Dendritic cell treated with granulocyte-macrophage colony-stimulating factor and Interleukin-4, amounts not matched to agents 40 ng/mL and 50 ng/mL, for 4 days (primary cell): ENCODE measurements at regions of chrX and their contacts with region 1.

Region 1: DNA sequence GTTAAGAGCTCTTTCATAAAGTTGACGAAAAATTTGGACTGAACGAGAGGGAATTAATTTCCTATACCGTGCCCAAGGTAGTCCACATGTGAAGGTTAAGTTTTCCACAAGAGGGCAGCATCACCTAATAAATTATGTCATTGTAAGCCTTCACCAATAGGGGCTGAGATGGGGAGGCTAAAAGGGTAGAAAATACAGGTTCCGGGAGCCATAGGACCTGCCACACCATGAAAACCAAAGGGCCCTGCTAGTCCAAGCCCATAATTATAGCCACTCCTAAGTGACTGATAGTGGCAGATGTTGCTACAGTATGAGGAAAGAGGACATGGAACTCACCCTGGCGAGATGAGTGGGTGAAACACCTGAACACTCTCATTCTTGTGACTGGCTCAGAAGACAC is 122.2 kb downstream of the SHROOM4 start:
- H3K4me3 Mint-ChIP-seq: no peak overlapping the region
- H3K27ac Mint-ChIP-seq: no peak overlapping the region
- H3K4me1 Mint-ChIP-seq: no peaks in the 10 kb centered on the region
- H3K27me3 Mint-ChIP-seq: no peaks in the 10 kb centered on the region

Region 2: GRCh38 chrX:50905334-50905733 is 213.5 kb after region 1 on chrX:
- intact Hi-C with region 1: loop called (anchors 5 kb)
- H3K4me3 Mint-ChIP-seq: no peak overlapping the region
- H3K27ac Mint-ChIP-seq: no peak overlapping the region
- H3K4me1 Mint-ChIP-seq: no peaks in the 10 kb centered on the region
- H3K27me3 Mint-ChIP-seq: no peaks in the 10 kb centered on the region

Region 3: DNA sequence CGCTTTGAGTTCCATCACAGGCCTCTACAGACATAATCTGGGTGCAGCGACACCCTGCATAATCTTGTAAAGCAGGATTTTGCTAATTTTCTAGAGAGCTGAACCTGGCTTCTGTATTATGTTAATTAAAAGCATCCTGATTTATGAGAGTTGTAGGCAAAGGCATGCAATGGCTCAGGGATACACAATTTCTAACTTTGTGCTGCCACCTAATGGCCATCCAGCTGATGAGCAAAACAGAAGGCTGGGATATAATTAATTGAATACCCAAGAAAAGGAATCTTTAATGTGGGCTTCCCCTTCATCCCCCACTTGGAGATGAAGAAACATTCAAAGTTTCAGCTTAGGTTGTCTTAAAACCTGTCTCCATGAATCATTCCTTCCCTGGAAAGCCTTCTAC is 296.8 kb after region 1 on chrX:
- intact Hi-C with region 1: loop called (anchors 5 kb)
- H3K4me3 Mint-ChIP-seq: no peak overlapping the region
- H3K27ac Mint-ChIP-seq: no peak overlapping the region
- H3K4me1 Mint-ChIP-seq: no peaks in the 10 kb centered on the region
- H3K27me3 Mint-ChIP-seq: peaks cover 2% of the 10 kb centered on the region

Region 4: DNA sequence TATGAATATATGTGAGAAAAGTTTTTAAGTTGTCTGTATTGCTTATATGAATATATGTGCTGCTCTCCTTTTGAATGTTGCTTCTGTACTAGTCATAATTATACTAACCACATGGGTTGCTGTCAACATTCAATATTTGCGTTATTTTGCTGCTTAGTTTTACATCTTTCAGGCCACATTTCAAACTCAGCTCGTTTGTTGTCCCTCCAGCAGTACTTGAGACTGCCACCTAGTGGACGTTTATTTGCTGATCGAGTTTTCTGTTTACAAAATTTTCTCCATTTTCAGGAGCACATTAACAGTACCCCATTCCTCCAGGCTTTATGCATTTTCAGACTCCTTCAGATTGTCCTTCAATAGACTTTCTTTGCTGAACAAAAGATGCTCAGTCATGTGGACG is 728.8 kb after region 1 on chrX:
- intact Hi-C with region 1: loop called (anchors 10 kb)
- H3K4me3 Mint-ChIP-seq: no peak overlapping the region
- H3K27ac Mint-ChIP-seq: no peak overlapping the region
- H3K4me1 Mint-ChIP-seq: no peaks in the 10 kb centered on the region
- H3K27me3 Mint-ChIP-seq: no peaks in the 10 kb centered on the region